ENCODE measurements at regions of chr12 and their contacts with region 1.

Region 1: GRCh38 chr12:15789220-15790171 is at the start of gene EPS8:
- DNase-seq: peak; percentile 74 to 85
- ATAC-seq: peak; percentile 91 to 93
- H3K4me3 ChIP-seq: peak within 1 kb of the TSS; percentile 75 to 84 (median 82)
- H3K27ac ChIP-seq: peak within 1 kb of the TSS; percentile 84 to 91 (median 87)
- H3K4me1 ChIP-seq: peaks cover 0 to 5% of the 10 kb centered on the region in 2 donors
- H3K27me3 ChIP-seq: no peaks in the 10 kb centered on the region
- CTCF ChIP-seq: peak in 2 of 5 experiments; percentile 19 to 24
- POLR2A ChIP-seq: peak; percentile 76 to 87
- total RNA-seq, gene EPS8: 26.8 to 48.4 (median 32.0) TPM

Region 2: DNA sequence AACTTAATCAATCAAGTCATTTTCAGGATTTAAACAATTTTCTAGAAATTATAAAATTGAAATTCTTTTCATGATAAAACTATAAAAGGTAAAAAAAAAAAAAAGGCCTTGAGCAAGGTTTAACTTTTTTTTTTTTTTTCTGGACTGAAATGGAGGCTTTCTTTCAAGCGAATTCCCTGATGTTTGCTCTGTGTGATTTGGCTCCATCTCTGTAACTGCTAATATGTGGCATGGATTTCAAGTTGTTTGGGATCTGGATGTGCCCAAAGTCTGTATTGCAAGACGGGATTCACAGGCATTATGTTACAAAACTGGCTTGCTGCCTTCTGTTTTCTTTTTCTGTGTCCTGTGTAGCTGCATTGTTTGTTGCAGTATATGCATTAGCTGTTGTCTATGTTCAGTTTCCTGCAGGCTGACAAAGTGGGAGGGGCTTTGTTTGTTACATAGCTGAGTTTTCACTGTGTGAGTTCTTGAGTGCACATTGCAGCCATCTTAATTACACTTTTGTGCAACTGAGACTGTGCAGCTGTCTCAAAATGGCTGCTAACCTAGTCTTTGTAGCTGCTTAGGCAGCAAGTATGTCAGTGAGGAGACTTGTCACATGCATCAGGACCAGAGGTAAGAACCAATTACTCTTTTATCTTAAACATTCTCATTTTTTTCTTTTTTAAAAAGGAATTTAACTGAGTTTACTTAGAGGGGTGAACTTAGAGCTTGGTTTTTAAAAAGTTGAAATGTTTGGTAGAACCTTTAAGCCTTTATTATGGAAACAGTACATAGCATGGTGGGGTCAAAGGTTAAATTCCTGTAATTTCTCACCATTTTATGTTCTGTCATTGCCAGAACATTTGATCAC is 1404.5 kb before region 1 on chr12:
- in situ Hi-C with region 1: loop called in 1 of 4 experiments (anchors 25 kb)
- intact Hi-C with region 1: loop called (anchors 10 kb)
- DNase-seq: peak; percentile 56 to 75
- ATAC-seq: peak; percentile 99
- H3K4me3 ChIP-seq: peak overlapping the region; percentile 16 to 53 (median 36)
- H3K27ac ChIP-seq: peak overlapping the region; percentile 61 to 83 (median 76)
- H3K4me1 ChIP-seq: peaks cover 15 to 29% of the 10 kb centered on the region in 2 donors
- H3K27me3 ChIP-seq: no peaks in the 10 kb centered on the region
- CTCF ChIP-seq: no peak
- POLR2A ChIP-seq: no peak

Region 3: DNA sequence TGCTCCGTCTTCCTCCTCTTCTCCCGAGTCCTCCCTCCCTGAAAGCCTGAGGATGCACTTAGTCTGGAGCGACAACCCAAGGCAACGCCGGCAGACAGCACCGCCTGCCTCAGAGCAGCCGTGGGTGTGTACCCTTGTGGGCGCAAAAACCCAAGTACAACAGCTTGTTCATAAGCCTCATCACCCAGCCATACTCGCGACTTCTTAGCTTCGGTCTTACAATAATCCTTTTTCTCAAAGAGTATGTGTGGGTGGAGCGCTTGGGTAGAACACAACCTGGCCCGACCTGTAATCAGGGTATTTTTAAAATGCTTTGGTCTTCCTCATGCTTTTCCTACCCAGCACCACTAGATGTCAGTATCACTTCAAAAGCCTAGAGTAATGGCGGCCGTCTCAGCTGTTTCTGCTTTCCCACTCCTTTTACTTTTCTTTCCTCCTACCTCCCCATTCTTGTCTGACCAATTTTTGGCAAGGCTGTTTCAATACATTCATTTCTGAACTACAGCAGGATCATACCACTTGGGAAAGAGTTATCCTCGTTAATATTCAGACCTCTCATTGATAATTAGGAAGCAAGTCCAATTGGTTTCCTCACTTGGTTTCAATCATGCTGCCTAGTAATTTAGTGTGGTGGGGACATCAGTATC is 199.2 kb before region 1 on chr12:
- in situ Hi-C with region 1: no loop called
- intact Hi-C with region 1: loop called (anchors 5 kb)
- DNase-seq: peak; percentile 8 to 31
- ATAC-seq: peak; percentile 94 to 95
- H3K4me3 ChIP-seq: peak overlapping the region; percentile 9 to 46 (median 32)
- H3K27ac ChIP-seq: peak overlapping the region in 2 of 4 donors; percentile 18 to 41
- H3K4me1 ChIP-seq: no peaks in the 10 kb centered on the region
- H3K27me3 ChIP-seq: no peaks in the 10 kb centered on the region
- CTCF ChIP-seq: peak; percentile 73 to 92 (median 83)
- POLR2A ChIP-seq: no peak

Region 4: GRCh38 chr12:15882118-15882971 is 92.8 kb after region 1 on chr12 and contains the start of gene STRAP:
- in situ Hi-C with region 1: no loop called
- intact Hi-C with region 1: loop called (anchors 1 kb)
- DNase-seq: peak; percentile 93 to 97
- ATAC-seq: peak; percentile 95 to 96
- H3K4me3 ChIP-seq: peak within 1 kb of the TSS; percentile 92 to 99 (median 97)
- H3K27ac ChIP-seq: peak within 1 kb of the TSS; percentile 91 to 100 (median 99)
- H3K4me1 ChIP-seq: peaks cover 33 to 34% of the 10 kb centered on the region in 2 donors
- H3K27me3 ChIP-seq: no peaks in the 10 kb centered on the region
- CTCF ChIP-seq: peak in 1 of 5 experiments; percentile 18
- POLR2A ChIP-seq: peak; percentile 96 to 98
- total RNA-seq, gene STRAP: 77.7 to 106 (median 102) TPM

Measured in gastrocnemius medialis (tissue), 4 donors.